Sigmoid colon (tissue), 7 donors: ENCODE measurements at regions of chr7 and their contacts with region 1.

Region 1: GRCh38 chr7:67302113-67303039 is 305.7 kb downstream of the TYW1 start:
- DNase-seq: peak; percentile 100
- H3K4me3 ChIP-seq: peak overlapping the region; percentile 72 to 78 (median 73)
- H3K27ac ChIP-seq: peak overlapping the region; percentile 93 to 96 (median 95)
- H3K4me1 ChIP-seq: peaks cover 0 to 13% (median 9%) of the 10 kb centered on the region in 4 donors
- H3K27me3 ChIP-seq: no peaks in the 10 kb centered on the region
- CTCF ChIP-seq: peak; percentile 43 to 58 (median 54)
- EP300 ChIP-seq: no peak
- POLR2A ChIP-seq: peak; percentile 26 to 43

Region 2: GRCh38 chr7:67045496-67045995 is 256.8 kb before region 1 on chr7:
- intact Hi-C with region 1: loop called (anchors 10 kb)
- DNase-seq: no peak
- H3K4me3 ChIP-seq: no peak overlapping the region
- H3K27ac ChIP-seq: peak overlapping the region in 1 of 4 donors; percentile 73
- H3K4me1 ChIP-seq: peaks cover 2 to 33% (median 14%) of the 10 kb centered on the region in 4 donors
- H3K27me3 ChIP-seq: no peaks in the 10 kb centered on the region
- CTCF ChIP-seq: no peak
- EP300 ChIP-seq: no peak
- POLR2A ChIP-seq: no peak

Region 3: GRCh38 chr7:67716729-67717128 is 414.4 kb after region 1 on chr7:
- intact Hi-C with region 1: no loop called
- DNase-seq: no peak
- H3K4me3 ChIP-seq: no peak overlapping the region
- H3K27ac ChIP-seq: no peak overlapping the region
- H3K4me1 ChIP-seq: no peaks in the 10 kb centered on the region
- H3K27me3 ChIP-seq: no peaks in the 10 kb centered on the region
- CTCF ChIP-seq: no peak
- EP300 ChIP-seq: no peak
- POLR2A ChIP-seq: no peak